ENCODE measurements at regions of chr11 and their contacts with region 1.

Region 1: DNA sequence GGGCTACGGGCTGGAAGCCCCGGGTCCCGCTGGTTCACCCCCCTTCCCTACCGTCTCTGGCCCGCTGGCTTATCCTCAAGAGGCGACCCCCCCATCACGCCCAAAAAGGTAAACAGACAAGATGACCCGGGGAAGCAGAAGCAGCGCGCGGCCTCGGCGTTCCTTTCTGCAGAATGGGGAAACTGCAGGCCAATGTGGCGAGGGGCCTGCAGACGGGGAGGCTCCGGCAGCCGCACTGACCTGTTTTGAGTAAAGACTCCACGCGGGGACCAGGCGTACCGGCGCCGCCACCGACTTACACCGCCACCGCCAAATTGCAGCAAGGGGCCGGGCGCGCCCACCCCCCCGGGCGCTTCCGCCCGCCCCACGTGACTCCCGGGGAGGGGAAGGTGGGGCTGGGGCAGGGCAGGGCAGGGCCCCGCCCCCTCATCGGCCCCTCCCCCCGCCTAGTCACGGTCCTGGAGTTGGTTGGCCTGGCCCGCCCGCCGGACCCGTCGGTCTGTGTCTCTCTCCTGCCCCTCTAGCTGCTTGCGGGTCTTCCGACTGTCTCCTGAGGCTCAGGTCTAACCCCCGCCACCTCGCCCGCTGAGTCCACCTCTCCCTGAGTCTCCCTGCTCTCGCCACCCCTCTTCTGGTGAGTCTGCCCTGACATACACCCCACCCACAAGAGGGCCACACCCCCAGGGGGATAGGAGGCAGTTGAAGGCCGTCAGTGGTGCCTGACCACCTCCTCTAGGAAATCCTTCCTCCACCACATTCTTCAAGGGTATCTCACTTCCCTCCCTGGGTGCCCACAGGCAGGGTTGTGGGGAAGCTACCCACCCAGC is at the start of gene ARAP1:
- DNase-seq: peak; percentile 63 to 78 (median 71)
- ATAC-seq: peak; percentile 95
- H3K4me3 ChIP-seq: peak within 1 kb of the TSS; percentile 93
- H3K4me3 Mint-ChIP-seq: peak within 1 kb of the TSS; percentile 89 to 98 (median 96)
- H3K27ac ChIP-seq: peak within 1 kb of the TSS; percentile 81
- H3K27ac Mint-ChIP-seq: peak within 1 kb of the TSS; percentile 87 to 95 (median 93)
- H3K4me1 ChIP-seq: peaks cover 29 to 38% of the 10 kb centered on the region in 2 donors
- H3K4me1 Mint-ChIP-seq: peaks cover 35 to 55% (median 48%) of the 10 kb centered on the region in 7 donors
- H3K27me3 ChIP-seq: no peaks in the 10 kb centered on the region
- H3K27me3 Mint-ChIP-seq: no peaks in the 10 kb centered on the region
- total RNA-seq, gene ARAP1: 119 to 317 (median 156) TPM

Region 2: GRCh38 chr11:72736452-72737069 is 15.7 kb before region 1 on chr11:
- CTCF ChIA-PET with region 1: interaction called, 4 read pairs
- POLR2A ChIA-PET with region 1: interaction called, 6 read pairs
- intact Hi-C with region 1: loop called (anchors 1 kb)
- DNase-seq: peak; percentile 47 to 83 (median 79)
- ATAC-seq: peak; percentile 86
- H3K4me3 ChIP-seq: peak overlapping the region; percentile 21
- H3K4me3 Mint-ChIP-seq: peak overlapping the region; percentile 61 to 87 (median 72)
- H3K27ac ChIP-seq: peak overlapping the region; percentile 67
- H3K27ac Mint-ChIP-seq: peak overlapping the region; percentile 89 to 99 (median 97)
- H3K4me1 ChIP-seq: peaks cover 33 to 44% of the 10 kb centered on the region in 2 donors
- H3K4me1 Mint-ChIP-seq: peaks cover 49 to 70% (median 59%) of the 10 kb centered on the region in 7 donors
- H3K27me3 ChIP-seq: no peaks in the 10 kb centered on the region
- H3K27me3 Mint-ChIP-seq: no peaks in the 10 kb centered on the region

Region 3: GRCh38 chr11:72781313-72782050 is 29.2 kb after region 1 on chr11:
- CTCF ChIA-PET with region 1: interaction called, 5 read pairs
- POLR2A ChIA-PET with region 1: interaction called, 4 read pairs
- intact Hi-C with region 1: loop called (anchors 1 to 2 kb)
- DNase-seq: peak; percentile 39 to 68 (median 49)
- ATAC-seq: peak; percentile 92
- H3K4me3 ChIP-seq: peak overlapping the region; percentile 52
- H3K4me3 Mint-ChIP-seq: peak overlapping the region; percentile 73 to 89 (median 84)
- H3K27ac ChIP-seq: peak overlapping the region; percentile 71
- H3K27ac Mint-ChIP-seq: peak overlapping the region in 8 of 9 donors; percentile 11 to 84 (median 68)
- H3K4me1 ChIP-seq: peaks cover 7 to 14% of the 10 kb centered on the region in 2 donors
- H3K4me1 Mint-ChIP-seq: peaks cover 23 to 34% (median 27%) of the 10 kb centered on the region in 7 donors
- H3K27me3 ChIP-seq: no peaks in the 10 kb centered on the region
- H3K27me3 Mint-ChIP-seq: peaks cover 0 to 6% (median 0%) of the 10 kb centered on the region in 5 donors

Region 4: DNA sequence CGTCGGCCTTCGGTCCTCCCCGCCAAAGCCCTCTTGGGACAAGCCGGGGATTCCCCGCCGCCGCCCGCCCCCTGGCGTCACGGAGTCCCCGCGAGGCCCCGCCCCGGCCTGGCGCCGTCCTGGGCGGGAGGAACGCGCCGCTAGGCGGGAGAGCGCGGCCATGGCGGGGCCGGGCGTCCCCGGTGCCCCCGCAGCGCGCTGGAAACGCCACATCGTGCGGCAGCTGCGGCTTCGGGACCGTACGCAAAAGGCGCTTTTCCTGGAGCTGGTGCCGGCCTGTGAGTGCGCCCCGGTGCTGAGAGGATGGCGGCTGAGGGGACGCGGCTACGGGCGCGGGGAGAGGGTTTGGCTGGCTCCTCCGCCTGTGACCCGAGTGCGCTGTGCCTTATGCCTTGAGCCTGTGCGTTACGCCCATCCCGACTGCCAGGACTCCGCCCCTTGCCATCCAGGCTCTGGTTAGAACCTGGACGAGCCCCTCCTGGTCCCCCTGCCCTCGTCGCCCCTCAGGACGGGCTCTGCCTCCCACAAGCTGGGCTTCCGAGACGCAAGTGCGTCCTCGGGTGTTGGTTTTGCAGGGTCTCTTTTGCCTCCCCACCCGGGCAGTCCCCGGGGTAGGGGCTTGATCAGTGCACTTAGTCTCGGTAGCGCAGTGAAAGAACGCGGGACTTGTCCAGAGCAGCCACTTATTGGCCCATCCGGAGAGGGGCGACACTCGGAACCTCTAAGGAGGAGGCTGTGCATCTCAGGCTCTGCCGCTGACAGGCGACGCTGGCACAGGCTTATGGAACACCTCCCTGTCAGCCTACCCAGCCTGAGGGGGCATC is 62.2 kb after region 1 on chr11 and contains the start of gene ATG16L2:
- CTCF ChIA-PET with region 1: no interaction called
- POLR2A ChIA-PET with region 1: no interaction called
- intact Hi-C with region 1: loop called (anchors 1 kb)
- DNase-seq: peak in 8 of 9 donors; percentile 53 to 96 (median 92)
- ATAC-seq: peak; percentile 89
- H3K4me3 ChIP-seq: peak within 1 kb of the TSS; percentile 89
- H3K4me3 Mint-ChIP-seq: peak within 1 kb of the TSS; percentile 97 to 99 (median 98)
- H3K27ac ChIP-seq: peak within 1 kb of the TSS; percentile 100
- H3K27ac Mint-ChIP-seq: peak within 1 kb of the TSS; percentile 86 to 99 (median 98)
- H3K4me1 ChIP-seq: peaks cover 18 to 23% of the 10 kb centered on the region in 2 donors
- H3K4me1 Mint-ChIP-seq: peaks cover 31 to 67% (median 52%) of the 10 kb centered on the region in 7 donors
- H3K27me3 ChIP-seq: no peaks in the 10 kb centered on the region
- H3K27me3 Mint-ChIP-seq: no peaks in the 10 kb centered on the region
- total RNA-seq, gene ATG16L2: 99.5 to 199 (median 166) TPM

Region 5: GRCh38 chr11:72821883-72822799 is 69.8 kb after region 1 on chr11:
- CTCF ChIA-PET with region 1: no interaction called
- POLR2A ChIA-PET with region 1: no interaction called
- intact Hi-C with region 1: loop called in 1 of 2 experiments (anchors 2 kb)
- DNase-seq: peak; percentile 68 to 93 (median 82)
- ATAC-seq: peak; percentile 96
- H3K4me3 ChIP-seq: peak overlapping the region; percentile 33
- H3K4me3 Mint-ChIP-seq: peak overlapping the region in 4 of 10 donors; percentile 34 to 65 (median 48)
- H3K27ac ChIP-seq: peak overlapping the region; percentile 66
- H3K27ac Mint-ChIP-seq: peak overlapping the region in 6 of 9 donors; percentile 23 to 86 (median 68)
- H3K4me1 ChIP-seq: peaks cover 0 to 3% of the 10 kb centered on the region in 2 donors
- H3K4me1 Mint-ChIP-seq: peaks cover 13 to 30% (median 25%) of the 10 kb centered on the region in 7 donors
- H3K27me3 ChIP-seq: no peaks in the 10 kb centered on the region
- H3K27me3 Mint-ChIP-seq: no peaks in the 10 kb centered on the region

Region 6: DNA sequence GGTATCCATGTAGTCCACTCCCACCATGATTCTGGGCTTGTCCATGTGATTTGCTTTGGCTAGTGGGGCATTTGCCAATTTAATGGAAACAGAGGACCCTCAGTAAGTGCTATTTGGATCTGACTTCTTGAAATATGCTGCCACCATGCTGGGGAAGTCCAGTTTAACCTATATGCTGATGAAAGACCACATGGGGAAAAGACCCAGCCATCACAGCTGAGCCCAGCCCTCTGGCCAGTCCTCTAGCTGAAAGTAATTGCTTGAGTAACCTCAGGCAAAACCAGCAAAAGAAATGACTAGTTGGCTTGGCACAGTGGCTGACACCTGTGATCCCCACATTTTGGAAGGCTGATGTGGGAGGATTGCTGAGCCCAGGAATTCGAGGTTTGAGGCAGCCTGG is 123.4 kb after region 1 on chr11:
- CTCF ChIA-PET with region 1: no interaction called
- POLR2A ChIA-PET with region 1: no interaction called
- intact Hi-C with region 1: no loop called
- DNase-seq: no peak
- ATAC-seq: no peak
- H3K4me3 ChIP-seq: no peak overlapping the region
- H3K4me3 Mint-ChIP-seq: no peak overlapping the region
- H3K27ac ChIP-seq: no peak overlapping the region
- H3K27ac Mint-ChIP-seq: no peak overlapping the region
- H3K4me1 ChIP-seq: no peaks in the 10 kb centered on the region
- H3K4me1 Mint-ChIP-seq: peaks cover 5 to 14% (median 12%) of the 10 kb centered on the region in 7 donors
- H3K27me3 ChIP-seq: no peaks in the 10 kb centered on the region
- H3K27me3 Mint-ChIP-seq: no peaks in the 10 kb centered on the region

Measured in naive thymus-derived CD4-positive, alpha-beta T cell (primary cell).